Activated CD4-positive, alpha-beta memory T cell treated with anti-CD3 and anti-CD28 coated beads for 36 hours (primary cell): ENCODE measurements at regions of chr1 and their contacts with region 1.

Region 1: GRCh38 chr1:40338745-40339424 is 21.8 kb upstream of the COL9A2 start:
- DNase-seq: peak; percentile 95
- H3K4me3 Mint-ChIP-seq: peak overlapping the region; percentile 4
- H3K27ac Mint-ChIP-seq: peak overlapping the region; percentile 2
- H3K4me1 Mint-ChIP-seq: peaks cover 45% of the 10 kb centered on the region
- H3K27me3 Mint-ChIP-seq: no peaks in the 10 kb centered on the region

Region 2: GRCh38 chr1:40014812-40015594 is 323.9 kb before region 1 on chr1:
- CTCF ChIA-PET with region 1: no interaction called
- POLR2A ChIA-PET with region 1: no interaction called
- intact Hi-C with region 1: no loop called
- DNase-seq: peak; percentile 38
- H3K4me3 Mint-ChIP-seq: no peak overlapping the region
- H3K27ac Mint-ChIP-seq: no peak overlapping the region
- H3K4me1 Mint-ChIP-seq: peaks cover 22% of the 10 kb centered on the region
- H3K27me3 Mint-ChIP-seq: no peaks in the 10 kb centered on the region

Region 3: GRCh38 chr1:40078512-40079333 is 260.2 kb before region 1 on chr1:
- CTCF ChIA-PET with region 1: interaction called, 66 read pairs
- POLR2A ChIA-PET with region 1: no interaction called
- intact Hi-C with region 1: loop called (anchors 1 kb)
- DNase-seq: peak; percentile 44
- H3K4me3 Mint-ChIP-seq: no peak overlapping the region
- H3K27ac Mint-ChIP-seq: no peak overlapping the region
- H3K4me1 Mint-ChIP-seq: peaks cover 10% of the 10 kb centered on the region
- H3K27me3 Mint-ChIP-seq: no peaks in the 10 kb centered on the region

Region 4: DNA sequence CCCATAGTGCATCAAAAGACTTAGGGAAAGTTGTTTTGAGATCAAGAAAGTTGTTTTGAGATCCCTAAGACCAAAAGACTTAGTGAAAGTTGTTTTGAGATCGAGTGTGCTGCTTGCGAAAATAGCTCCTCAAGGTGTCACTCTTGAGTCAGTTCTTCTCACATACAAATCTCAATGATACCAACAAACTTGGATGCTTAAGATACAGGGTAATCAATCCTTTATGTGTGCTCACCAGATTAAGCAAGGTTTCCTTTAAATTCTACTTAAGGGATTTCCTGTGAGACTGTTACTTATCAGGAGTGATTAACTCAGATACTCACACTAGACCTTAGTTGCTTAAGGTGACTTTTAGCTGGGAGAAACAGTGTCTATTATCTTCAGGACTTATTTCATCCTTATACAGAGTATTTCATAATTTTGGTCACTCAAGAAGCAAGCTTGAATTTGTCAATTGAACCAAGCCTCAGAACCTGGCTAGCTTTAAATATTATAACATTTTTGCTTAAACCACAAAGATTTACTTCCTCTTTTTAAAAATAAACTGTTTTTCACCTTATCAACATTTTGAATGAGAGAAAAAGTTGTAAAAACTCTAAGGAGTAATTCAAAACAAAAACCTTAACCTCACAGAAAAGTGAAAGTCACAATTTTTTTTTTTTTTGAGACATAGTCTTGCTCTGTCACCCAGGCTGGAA is 185.7 kb before region 1 on chr1:
- CTCF ChIA-PET with region 1: interaction called, 282 read pairs
- POLR2A ChIA-PET with region 1: interaction called, 9 read pairs
- intact Hi-C with region 1: loop called (anchors 1 kb)
- DNase-seq: peak; percentile 38
- H3K4me3 Mint-ChIP-seq: no peak overlapping the region
- H3K27ac Mint-ChIP-seq: no peak overlapping the region
- H3K4me1 Mint-ChIP-seq: peaks cover 5% of the 10 kb centered on the region
- H3K27me3 Mint-ChIP-seq: peaks cover 3% of the 10 kb centered on the region

Region 5: GRCh38 chr1:40185951-40186864 is 152.7 kb before region 1 on chr1:
- CTCF ChIA-PET with region 1: interaction called, 14 read pairs
- POLR2A ChIA-PET with region 1: no interaction called
- intact Hi-C with region 1: no loop called
- DNase-seq: peak; percentile 75
- H3K4me3 Mint-ChIP-seq: peak overlapping the region; percentile 46
- H3K27ac Mint-ChIP-seq: peak overlapping the region; percentile 56
- H3K4me1 Mint-ChIP-seq: peaks cover 45% of the 10 kb centered on the region
- H3K27me3 Mint-ChIP-seq: no peaks in the 10 kb centered on the region

Region 6: GRCh38 chr1:40363721-40364120 is 24.8 kb after region 1 on chr1:
- CTCF ChIA-PET with region 1: interaction called, 35 read pairs
- POLR2A ChIA-PET with region 1: interaction called, 9 read pairs
- intact Hi-C with region 1: no loop called
- DNase-seq: peak; percentile 69
- H3K4me3 Mint-ChIP-seq: no peak overlapping the region
- H3K27ac Mint-ChIP-seq: peak overlapping the region; percentile 62
- H3K4me1 Mint-ChIP-seq: peaks cover 15% of the 10 kb centered on the region
- H3K27me3 Mint-ChIP-seq: no peaks in the 10 kb centered on the region

Region 7: DNA sequence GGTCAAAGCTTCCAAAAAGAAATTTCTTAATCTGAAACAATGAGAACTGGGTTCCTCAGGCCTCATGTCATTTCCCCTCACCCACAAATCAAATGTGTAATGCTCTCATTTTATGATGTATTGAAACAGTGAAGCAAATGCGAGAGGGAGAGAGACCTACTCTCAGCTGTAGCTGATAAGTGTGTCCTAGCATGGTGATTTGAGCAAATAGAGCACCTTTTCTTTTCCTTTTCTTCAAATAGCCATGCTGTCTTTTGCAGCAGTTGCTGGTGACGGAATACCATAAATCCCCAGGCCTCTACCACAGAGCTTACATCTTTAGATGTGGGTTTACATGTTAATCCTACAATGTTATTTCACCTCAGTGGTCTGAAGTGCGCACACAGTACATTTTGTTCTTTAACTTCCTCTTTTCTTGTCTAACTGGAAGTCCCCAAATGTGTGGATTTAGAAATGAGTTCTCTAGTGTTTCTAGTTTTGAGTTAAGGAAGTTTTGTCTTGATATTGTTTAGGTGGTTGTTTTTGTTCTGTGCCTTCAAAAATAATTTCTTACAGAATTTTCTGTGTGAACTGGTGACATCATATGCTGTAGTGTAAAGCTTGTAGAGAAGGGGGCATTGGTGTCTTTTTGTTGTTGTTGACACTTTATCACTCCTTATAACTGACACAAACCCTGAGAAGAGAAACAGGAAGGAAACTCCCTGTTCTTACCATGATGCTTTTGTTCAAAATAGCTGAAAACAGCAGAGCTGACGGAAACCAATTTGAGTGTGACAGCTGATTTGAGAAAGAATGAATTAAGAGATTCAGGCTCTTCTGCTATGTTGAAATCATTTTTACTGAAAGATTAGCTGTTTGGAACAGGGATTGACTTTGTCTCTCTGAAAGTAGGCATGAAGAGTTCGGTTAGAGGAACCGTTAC is 46.8 kb after region 1 on chr1:
- CTCF ChIA-PET with region 1: interaction called, 7 read pairs
- POLR2A ChIA-PET with region 1: interaction called, 23 read pairs
- intact Hi-C with region 1: loop called (anchors 2 kb)
- DNase-seq: peak; percentile 77
- H3K4me3 Mint-ChIP-seq: peak overlapping the region; percentile 81
- H3K27ac Mint-ChIP-seq: peak overlapping the region; percentile 100
- H3K4me1 Mint-ChIP-seq: peaks cover 90% of the 10 kb centered on the region
- H3K27me3 Mint-ChIP-seq: no peaks in the 10 kb centered on the region

Region 8: DNA sequence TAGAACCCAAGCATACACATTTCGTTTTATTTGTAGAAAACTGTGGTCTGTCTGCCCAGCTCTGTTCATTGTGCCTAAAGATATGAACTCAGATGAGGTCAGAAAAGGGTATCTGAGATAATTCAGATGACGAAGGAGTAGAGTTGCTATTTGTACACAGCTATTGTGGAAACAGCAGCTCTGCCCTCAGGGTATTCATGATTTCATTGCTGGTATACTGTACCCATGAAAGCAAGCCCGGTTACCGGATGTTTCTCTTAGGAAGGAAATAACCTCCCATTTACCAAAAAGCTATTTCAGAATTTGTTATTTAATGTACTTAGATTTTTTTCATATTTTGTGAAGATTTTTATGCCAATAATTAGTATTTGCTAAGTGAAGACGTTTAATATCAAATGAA is 72.4 kb after region 1 on chr1:
- CTCF ChIA-PET with region 1: interaction called, 188 read pairs
- POLR2A ChIA-PET with region 1: interaction called, 5 read pairs
- intact Hi-C with region 1: no loop called
- DNase-seq: no peak
- H3K4me3 Mint-ChIP-seq: no peak overlapping the region
- H3K27ac Mint-ChIP-seq: no peak overlapping the region
- H3K4me1 Mint-ChIP-seq: peaks cover 24% of the 10 kb centered on the region
- H3K27me3 Mint-ChIP-seq: no peaks in the 10 kb centered on the region